PC-9 (cell line): ENCODE measurements at regions of chr5 and their contacts with region 1.

Region 1: DNA sequence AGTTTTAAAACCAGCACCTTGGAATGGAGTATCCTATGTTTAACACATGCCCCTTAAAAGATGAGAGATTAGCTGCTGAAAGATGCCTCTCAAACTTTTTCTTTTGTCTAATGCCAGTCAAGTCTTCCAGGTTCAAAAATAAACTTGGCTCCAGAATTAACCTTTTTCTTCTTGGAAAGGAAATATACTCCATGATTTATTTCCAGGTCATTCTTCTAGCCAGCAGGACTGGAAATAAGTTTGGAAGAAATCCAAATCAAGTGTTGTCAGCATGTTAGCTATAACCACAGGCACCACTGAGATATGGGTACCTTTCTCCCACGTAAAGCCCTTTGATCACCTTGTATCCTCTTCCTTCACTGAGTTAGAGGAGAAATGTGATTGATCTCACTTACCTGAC is 56.1 kb downstream of the NLN start:
- DNase-seq: no peak
- H3K4me3 ChIP-seq: no peak overlapping the region
- H3K27ac ChIP-seq: no peak overlapping the region
- H3K4me1 ChIP-seq: no peaks in the 10 kb centered on the region
- H3K27me3 ChIP-seq: no peaks in the 10 kb centered on the region
- CTCF ChIP-seq: no peak

Region 2: DNA sequence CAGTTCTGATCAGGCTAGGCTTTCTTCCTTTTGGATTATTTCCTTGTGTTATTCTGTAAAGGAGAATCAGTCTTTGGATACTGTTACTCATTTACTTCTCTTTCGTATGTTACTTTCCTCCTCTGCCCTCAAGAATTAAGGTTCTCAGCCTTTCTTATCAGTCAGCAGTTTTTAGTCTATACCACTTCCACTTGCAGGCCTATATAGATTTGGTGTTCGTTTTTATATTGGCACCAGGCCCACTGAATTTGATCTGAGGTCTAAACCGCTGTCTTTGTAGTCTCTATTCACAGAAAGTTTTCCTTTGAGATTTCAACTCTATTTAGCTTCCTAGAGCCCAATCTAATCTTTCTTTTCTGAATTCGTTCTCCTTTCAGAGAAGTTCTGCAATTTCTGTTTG is 211.0 kb after region 1 on chr5:
- CTCF ChIA-PET with region 1: no interaction called
- POLR2A ChIA-PET with region 1: interaction called, 13 read pairs
- intact Hi-C with region 1: no loop called
- DNase-seq: no peak
- H3K4me3 ChIP-seq: no peak overlapping the region
- H3K27ac ChIP-seq: no peak overlapping the region
- H3K4me1 ChIP-seq: no peaks in the 10 kb centered on the region; the same call in 1 of the 2 replicates
- H3K27me3 ChIP-seq: no peaks in the 10 kb centered on the region
- CTCF ChIP-seq: no peak

Region 3: GRCh38 chr5:67693956-67694809 is 1916.1 kb after region 1 on chr5:
- CTCF ChIA-PET with region 1: no interaction called
- POLR2A ChIA-PET with region 1: no interaction called
- intact Hi-C with region 1: no loop called
- DNase-seq: no peak
- H3K4me3 ChIP-seq: no peak overlapping the region
- H3K27ac ChIP-seq: no peak overlapping the region
- H3K4me1 ChIP-seq: no peaks in the 10 kb centered on the region
- H3K27me3 ChIP-seq: no peaks in the 10 kb centered on the region
- CTCF ChIP-seq: no peak